Activated naive CD4-positive, alpha-beta T cell treated with anti-CD3 and anti-CD28 coated beads, Interleukin-2, amount 10 ng/mL, durations not matched to agents 7 days and 5 days (primary cell): ENCODE measurements at regions of chrX and their contacts with region 1.

Region 1: GRCh38 chrX:154748712-154749343 is 2.0 kb downstream of the GAB3 start:
- DNase-seq: peak; percentile 57
- H3K4me3 Mint-ChIP-seq: peak overlapping the region; percentile 12
- H3K27ac Mint-ChIP-seq: no peak overlapping the region
- H3K4me1 Mint-ChIP-seq: peaks cover 23% of the 10 kb centered on the region
- H3K27me3 Mint-ChIP-seq: peaks cover 8% of the 10 kb centered on the region

Region 2: GRCh38 chrX:154712781-154713740 is 35.8 kb before region 1 on chrX:
- CTCF ChIA-PET with region 1: interaction called, 65 read pairs
- DNase-seq: peak; percentile 43
- H3K4me3 Mint-ChIP-seq: peak overlapping the region; percentile 8
- H3K27ac Mint-ChIP-seq: peak overlapping the region; percentile 87
- H3K4me1 Mint-ChIP-seq: peaks cover 48% of the 10 kb centered on the region
- H3K27me3 Mint-ChIP-seq: no peaks in the 10 kb centered on the region

Region 3: GRCh38 chrX:154724993-154725756 is 23.7 kb before region 1 on chrX:
- CTCF ChIA-PET with region 1: interaction called, 65 read pairs
- DNase-seq: no peak
- H3K4me3 Mint-ChIP-seq: no peak overlapping the region
- H3K27ac Mint-ChIP-seq: peak overlapping the region; percentile 58
- H3K4me1 Mint-ChIP-seq: peaks cover 57% of the 10 kb centered on the region
- H3K27me3 Mint-ChIP-seq: no peaks in the 10 kb centered on the region

Region 4: DNA sequence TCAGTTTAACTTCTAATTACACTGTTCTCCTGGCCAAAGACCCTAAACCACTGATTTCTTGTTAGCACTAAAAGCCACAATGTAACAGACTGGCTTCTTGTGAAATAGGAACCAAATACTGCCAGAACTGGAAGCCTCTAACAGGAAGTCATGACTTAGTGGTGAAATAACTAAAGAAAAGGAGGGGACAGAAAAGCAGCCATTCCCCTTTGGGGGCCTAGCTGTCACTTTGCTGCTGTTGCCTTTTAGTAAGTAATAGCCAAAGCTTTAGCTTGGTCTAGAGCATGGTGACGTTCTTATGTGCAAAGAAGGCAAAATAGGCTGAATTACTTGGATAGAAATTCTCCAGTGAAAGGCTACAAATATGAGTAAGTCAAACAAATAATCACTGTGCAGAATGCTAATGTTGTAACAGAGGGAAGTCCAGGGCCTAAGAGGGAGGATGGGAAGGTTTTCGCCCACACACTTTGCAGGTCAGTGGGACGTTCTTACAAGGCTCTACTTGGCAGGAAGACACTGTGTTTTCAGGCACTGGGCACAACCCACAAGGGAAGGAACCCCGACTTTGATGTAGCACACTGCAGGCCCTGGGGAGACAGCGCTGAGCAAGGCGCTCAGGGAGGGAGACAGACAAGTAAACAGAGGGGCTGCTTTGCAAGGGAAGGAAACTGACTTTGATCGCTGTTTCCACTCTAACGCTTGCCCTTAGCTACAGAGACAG is 14.6 kb before region 1 on chrX:
- CTCF ChIA-PET with region 1: interaction called, 29 read pairs
- DNase-seq: peak; percentile 51
- H3K4me3 Mint-ChIP-seq: peak overlapping the region; percentile 57
- H3K27ac Mint-ChIP-seq: peak overlapping the region; percentile 97
- H3K4me1 Mint-ChIP-seq: peaks cover 95% of the 10 kb centered on the region
- H3K27me3 Mint-ChIP-seq: no peaks in the 10 kb centered on the region

Region 5: GRCh38 chrX:154762523-154763289 is 13.9 kb after region 1 on chrX and contains the start of gene DKC1:
- CTCF ChIA-PET with region 1: interaction called, 13 read pairs
- DNase-seq: peak; percentile 96
- H3K4me3 Mint-ChIP-seq: peak within 1 kb of the TSS; percentile 85
- H3K27ac Mint-ChIP-seq: peak within 1 kb of the TSS; percentile 97
- H3K4me1 Mint-ChIP-seq: peaks cover 36% of the 10 kb centered on the region
- H3K27me3 Mint-ChIP-seq: no peaks in the 10 kb centered on the region